AG04450 (cell line): ENCODE measurements at regions of chr10 and their contacts with region 1.

Region 1: GRCh38 chr10:11515596-11516430 is 95.6 kb downstream of the USP6NL start:
- DNase-seq: peak; percentile 32
- H3K4me3 ChIP-seq: no peak overlapping the region
- H3K27ac ChIP-seq: no peak overlapping the region
- H3K27me3 ChIP-seq: no peaks in the 10 kb centered on the region
- CTCF ChIP-seq: peak; percentile 93

Region 2: DNA sequence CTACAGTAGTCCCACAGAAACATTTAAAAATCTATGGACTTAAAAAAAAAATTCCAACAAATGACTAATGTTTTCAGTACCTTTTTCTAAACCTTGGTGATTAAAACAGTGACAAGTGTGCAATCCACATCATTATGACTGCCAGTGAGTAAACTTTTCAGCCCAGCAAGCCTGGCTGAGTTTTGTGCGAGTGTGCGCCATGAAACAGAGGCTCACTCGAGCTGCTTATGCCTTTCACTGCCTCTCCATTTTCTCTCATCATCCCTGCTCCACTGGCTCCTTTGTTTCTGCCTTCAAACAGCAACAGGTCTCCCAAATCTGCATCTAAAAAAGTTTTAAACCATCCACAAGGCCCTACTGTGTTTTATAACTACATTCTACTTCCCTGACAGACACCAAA is 10.2 kb before region 1 on chr10:
- CTCF ChIA-PET with region 1: interaction called, 22 read pairs
- POLR2A ChIA-PET with region 1: no interaction called
- DNase-seq: no peak
- H3K4me3 ChIP-seq: no peak overlapping the region
- H3K27ac ChIP-seq: no peak overlapping the region
- H3K27me3 ChIP-seq: no peaks in the 10 kb centered on the region
- CTCF ChIP-seq: no peak

Region 3: DNA sequence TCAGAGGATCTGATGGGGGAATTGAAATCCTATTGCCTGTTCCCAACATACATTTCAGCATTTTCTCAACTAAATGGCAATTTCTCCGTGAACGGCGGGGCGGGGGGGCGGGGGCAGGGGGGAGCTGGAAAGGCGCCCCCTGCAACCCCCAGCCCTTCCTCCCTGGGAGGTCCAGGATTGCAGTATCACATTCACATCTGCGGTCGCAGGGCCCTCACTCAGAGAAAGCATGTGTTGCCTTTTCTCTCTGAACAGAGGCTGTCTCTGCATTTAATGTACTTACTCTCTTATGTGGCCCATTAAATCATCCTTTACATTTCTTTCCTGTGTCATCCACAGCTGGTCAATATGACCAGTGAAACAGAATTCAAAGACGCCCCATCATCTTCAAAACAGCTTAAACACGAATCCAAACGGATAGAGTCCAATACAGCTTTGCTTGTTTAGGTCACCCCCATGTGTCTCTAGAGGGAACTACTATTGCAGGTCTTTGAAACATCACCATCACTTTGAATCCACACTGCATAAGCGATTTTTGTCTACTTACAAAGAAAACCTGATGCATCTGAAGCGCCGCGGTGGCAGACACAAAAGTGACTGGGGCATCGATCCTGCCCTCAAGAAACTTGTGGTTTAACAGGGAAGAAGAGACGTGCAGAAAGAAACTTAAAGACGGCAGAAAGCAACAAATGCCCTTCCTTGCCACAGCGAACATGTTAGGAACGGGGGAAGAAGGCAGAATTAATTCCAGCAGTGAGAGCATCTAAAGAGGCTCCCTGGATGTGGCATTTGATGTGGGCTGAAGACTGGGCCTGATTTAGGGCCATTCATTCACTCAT is 209.3 kb after region 1 on chr10:
- CTCF ChIA-PET with region 1: interaction called, 95 read pairs
- POLR2A ChIA-PET with region 1: no interaction called
- DNase-seq: peak; percentile 49
- H3K4me3 ChIP-seq: no peak overlapping the region
- H3K27ac ChIP-seq: no peak overlapping the region
- H3K27me3 ChIP-seq: peaks cover 3% of the 10 kb centered on the region
- CTCF ChIP-seq: peak; percentile 90